ENCODE measurements at regions of chr7 and their contacts with region 1.

Region 1: DNA sequence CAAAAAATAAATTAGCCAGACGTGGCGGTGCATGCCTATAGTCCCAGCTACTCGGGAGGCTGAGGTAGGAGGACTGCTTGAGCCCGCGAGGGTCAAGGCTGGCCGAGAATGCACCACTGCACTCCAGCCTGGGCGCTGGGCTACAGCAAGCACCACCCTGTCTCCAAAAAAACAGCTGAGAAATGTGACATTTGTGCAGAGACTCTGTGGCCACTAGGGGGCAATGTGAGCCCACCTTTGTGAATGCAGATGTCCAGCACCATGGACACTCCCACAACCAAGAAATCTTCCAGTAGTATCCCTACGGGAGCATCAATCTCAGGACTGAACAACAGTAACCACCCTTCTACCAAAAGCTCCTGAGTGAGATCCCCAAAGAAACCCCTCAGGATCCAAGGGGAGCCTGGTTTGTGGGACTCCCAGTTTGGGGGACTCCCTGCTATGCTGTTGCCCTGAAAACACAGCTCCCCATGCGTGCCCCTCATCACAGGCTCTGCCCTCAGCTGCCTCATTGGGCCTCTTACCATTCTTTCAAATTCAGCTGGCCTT is 6.2 kb upstream of the AHCYL2 start:
- DNase-seq: peak; percentile 63 to 83 (median 73)
- H3K4me3 ChIP-seq: no peak overlapping the region
- H3K4me3 Mint-ChIP-seq: peak overlapping the region in 1 of 7 donors; percentile 52
- H3K27ac ChIP-seq: no peak overlapping the region
- H3K27ac Mint-ChIP-seq: peak overlapping the region in 2 of 8 donors; percentile 60 to 77
- H3K4me1 ChIP-seq: no peaks in the 10 kb centered on the region
- H3K4me1 Mint-ChIP-seq: peaks cover 6 to 13% (median 6%) of the 10 kb centered on the region in 3 donors
- H3K27me3 ChIP-seq: no peaks in the 10 kb centered on the region
- H3K27me3 Mint-ChIP-seq: peaks cover 2 to 7% of the 10 kb centered on the region in 2 donors

Region 2: DNA sequence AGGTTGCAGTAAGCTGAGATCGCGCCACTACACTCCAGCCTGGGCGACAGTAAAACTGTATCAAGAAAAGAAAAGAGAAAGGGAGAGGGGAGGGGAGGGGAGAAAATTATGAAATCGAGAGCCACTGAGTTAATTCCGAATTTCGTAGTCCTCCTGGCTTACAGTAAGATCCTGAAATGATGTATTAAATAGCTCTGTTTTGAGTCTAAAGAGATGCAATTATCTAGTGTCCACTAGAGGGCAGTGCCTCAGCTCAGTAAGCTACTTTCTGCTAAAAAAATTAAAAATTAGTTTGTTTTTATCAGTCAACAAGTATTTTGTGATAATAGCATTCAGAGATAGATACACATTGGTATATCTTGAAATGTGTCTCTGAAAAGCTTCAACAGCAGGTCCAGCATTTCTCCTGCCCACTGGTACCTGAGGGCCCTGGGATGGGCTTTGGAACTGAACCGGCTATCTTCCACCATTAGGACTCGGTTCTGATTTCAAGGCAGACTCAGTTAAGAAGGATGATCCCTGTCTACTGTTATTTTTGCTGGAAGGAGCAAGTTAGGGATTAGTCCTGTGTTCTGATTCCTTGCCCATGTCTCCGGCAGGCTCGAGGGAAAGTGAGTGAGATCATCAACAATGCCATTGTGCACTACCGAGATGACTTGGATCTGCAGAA is 54.6 kb before region 1 on chr7:
- CTCF ChIA-PET with region 1: interaction called, 10 read pairs
- POLR2A ChIA-PET with region 1: no interaction called
- DNase-seq: peak in 1 of 5 donors; percentile 34
- H3K4me3 ChIP-seq: no peak overlapping the region
- H3K4me3 Mint-ChIP-seq: no peak overlapping the region
- H3K27ac ChIP-seq: no peak overlapping the region
- H3K27ac Mint-ChIP-seq: no peak overlapping the region
- H3K4me1 ChIP-seq: peaks cover 4% of the 10 kb centered on the region
- H3K4me1 Mint-ChIP-seq: peaks cover 0 to 9% (median 1%) of the 10 kb centered on the region in 3 donors
- H3K27me3 ChIP-seq: no peaks in the 10 kb centered on the region
- H3K27me3 Mint-ChIP-seq: no peaks in the 10 kb centered on the region

Region 3: GRCh38 chr7:129231666-129232065 is 13.1 kb after region 1 on chr7:
- CTCF ChIA-PET with region 1: interaction called, 21 read pairs
- POLR2A ChIA-PET with region 1: no interaction called
- DNase-seq: no peak
- H3K4me3 ChIP-seq: no peak overlapping the region
- H3K4me3 Mint-ChIP-seq: no peak overlapping the region
- H3K27ac ChIP-seq: no peak overlapping the region
- H3K27ac Mint-ChIP-seq: no peak overlapping the region
- H3K4me1 ChIP-seq: peaks cover under 1% of the 10 kb centered on the region
- H3K4me1 Mint-ChIP-seq: peaks cover 4 to 26% (median 23%) of the 10 kb centered on the region in 3 donors
- H3K27me3 ChIP-seq: no peaks in the 10 kb centered on the region
- H3K27me3 Mint-ChIP-seq: no peaks in the 10 kb centered on the region

Region 4: GRCh38 chr7:129252128-129252527 is 33.5 kb after region 1 on chr7:
- CTCF ChIA-PET with region 1: interaction called, 13 read pairs
- POLR2A ChIA-PET with region 1: interaction called, 11 read pairs
- DNase-seq: no peak
- H3K4me3 ChIP-seq: no peak overlapping the region
- H3K4me3 Mint-ChIP-seq: no peak overlapping the region
- H3K27ac ChIP-seq: no peak overlapping the region
- H3K27ac Mint-ChIP-seq: no peak overlapping the region
- H3K4me1 ChIP-seq: no peaks in the 10 kb centered on the region
- H3K4me1 Mint-ChIP-seq: peaks cover under 1 to 14% (median 11%) of the 10 kb centered on the region in 3 donors
- H3K27me3 ChIP-seq: no peaks in the 10 kb centered on the region
- H3K27me3 Mint-ChIP-seq: no peaks in the 10 kb centered on the region

Region 5: DNA sequence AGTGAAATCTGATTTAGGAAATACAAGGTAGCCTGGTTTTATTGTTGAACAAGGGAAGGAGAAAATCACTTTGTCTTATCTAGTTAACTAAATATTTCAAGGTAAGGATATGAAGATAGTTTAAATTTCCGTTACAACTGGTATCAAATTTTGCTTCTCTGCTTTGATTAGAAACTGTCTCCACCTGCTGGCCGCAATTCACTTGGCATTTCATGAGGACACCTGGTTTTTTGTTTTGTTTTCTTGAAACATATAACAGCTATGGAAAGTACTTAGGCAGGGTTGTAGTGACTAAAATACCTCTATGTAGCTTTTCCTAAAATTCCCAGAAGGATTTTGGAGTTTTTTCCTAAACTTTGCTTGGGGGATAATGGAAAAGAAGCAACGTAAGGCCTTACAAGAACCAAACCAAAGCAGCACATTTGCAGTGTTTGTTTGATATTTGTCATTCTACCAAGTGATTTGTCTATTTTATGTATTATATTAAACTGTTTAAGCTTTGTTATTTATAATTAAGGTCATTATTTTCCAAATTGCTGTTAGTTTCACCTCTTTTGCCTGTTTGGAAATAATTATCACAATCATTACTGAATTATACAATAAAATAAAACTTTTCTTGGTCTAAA is 79.8 kb after region 1 on chr7:
- CTCF ChIA-PET with region 1: interaction called, 66 read pairs
- POLR2A ChIA-PET with region 1: no interaction called
- DNase-seq: peak; percentile 19 to 55 (median 27)
- H3K4me3 ChIP-seq: no peak overlapping the region
- H3K4me3 Mint-ChIP-seq: no peak overlapping the region
- H3K27ac ChIP-seq: no peak overlapping the region
- H3K27ac Mint-ChIP-seq: no peak overlapping the region
- H3K4me1 ChIP-seq: no peaks in the 10 kb centered on the region
- H3K4me1 Mint-ChIP-seq: peaks cover 0 to 1% (median 0%) of the 10 kb centered on the region in 3 donors
- H3K27me3 ChIP-seq: no peaks in the 10 kb centered on the region
- H3K27me3 Mint-ChIP-seq: no peaks in the 10 kb centered on the region

Region 6: DNA sequence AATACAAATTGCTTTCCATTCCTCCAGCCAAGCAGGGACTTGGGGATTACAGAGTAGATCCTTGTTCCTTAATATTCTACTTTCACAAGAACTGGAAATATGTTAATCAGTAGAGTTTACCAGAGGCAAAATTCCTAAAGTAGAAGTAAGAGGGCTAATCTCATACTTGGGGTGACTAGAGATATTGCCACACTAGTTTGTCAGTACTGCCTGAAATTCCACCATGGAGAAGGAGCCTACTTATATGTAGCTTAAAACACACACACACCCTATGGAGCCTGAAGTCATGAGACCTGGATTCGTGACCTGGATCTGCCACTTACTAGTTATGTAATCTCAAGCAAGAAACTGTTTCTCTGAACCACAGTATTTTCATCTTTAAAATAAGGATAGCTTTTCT is 249.5 kb after region 1 on chr7:
- CTCF ChIA-PET with region 1: interaction called, 12 read pairs
- POLR2A ChIA-PET with region 1: no interaction called
- DNase-seq: no peak
- H3K4me3 ChIP-seq: no peak overlapping the region
- H3K4me3 Mint-ChIP-seq: peak overlapping the region in 2 of 7 donors; percentile 4 to 13
- H3K27ac ChIP-seq: no peak overlapping the region
- H3K27ac Mint-ChIP-seq: peak overlapping the region in 4 of 8 donors; percentile 43 to 87 (median 56)
- H3K4me1 ChIP-seq: no peaks in the 10 kb centered on the region
- H3K4me1 Mint-ChIP-seq: peaks cover 0 to 8% (median 0%) of the 10 kb centered on the region in 3 donors
- H3K27me3 ChIP-seq: no peaks in the 10 kb centered on the region
- H3K27me3 Mint-ChIP-seq: no peaks in the 10 kb centered on the region

Measured in CD8-positive, alpha-beta memory T cell (primary cell).